ENCODE measurements at regions of chr12 and their contacts with region 1.

Region 1: DNA sequence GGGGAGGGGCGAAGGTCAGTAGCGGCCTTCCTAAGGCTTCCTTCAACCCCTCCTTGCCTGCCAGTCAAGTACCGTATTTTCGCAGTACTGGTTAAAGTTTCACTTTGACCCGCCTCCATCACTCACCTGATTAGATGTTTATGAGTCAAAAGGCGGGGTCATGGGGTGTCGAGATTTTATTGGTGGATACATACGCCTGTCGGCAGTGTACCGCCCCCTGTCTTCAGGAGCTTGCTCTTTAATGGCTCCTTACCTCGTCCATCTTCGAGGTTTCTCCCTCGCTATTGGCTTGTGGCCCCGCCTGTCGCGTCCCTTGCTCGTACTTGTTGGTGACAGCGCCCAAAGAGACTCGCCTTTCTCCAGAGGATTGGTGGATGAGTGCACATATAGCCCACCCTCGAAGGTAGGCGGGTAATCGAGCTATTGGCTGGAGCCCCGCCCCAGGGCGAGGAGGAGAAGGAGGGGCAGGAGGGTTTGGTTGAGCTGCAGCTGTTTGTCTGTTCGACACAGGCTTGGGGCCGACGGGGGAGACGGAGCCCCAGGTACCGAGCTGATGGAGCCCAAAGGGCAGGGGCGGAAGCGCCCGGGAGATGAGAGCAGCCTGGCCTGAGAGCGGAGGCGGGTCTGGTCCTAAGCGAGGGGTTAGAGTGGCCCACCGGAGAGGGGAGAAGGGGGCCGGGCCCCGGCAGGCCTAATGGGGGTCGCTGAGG is at the start of gene RAB5B:
- DNase-seq: peak; percentile 99
- ATAC-seq: peak; percentile 91
- H3K4me3 Mint-ChIP-seq: no peak within 1 kb of the TSS
- H3K27ac Mint-ChIP-seq: no peak within 1 kb of the TSS
- H3K4me1 Mint-ChIP-seq: no peaks in the 10 kb centered on the region; the same call in 1 of the 2 replicates
- H3K27me3 Mint-ChIP-seq: no peaks in the 10 kb centered on the region
- CTCF ChIP-seq: no peak
- total RNA-seq, gene RAB5B: 55.0 to 65.8 TPM (median 64.3 TPM) in 3 replicates

Region 2: GRCh38 chr12:55829967-55830600 is 143.7 kb before region 1 on chr12:
- CTCF ChIA-PET with region 1: interaction called, 6 read pairs
- POLR2A ChIA-PET with region 1: interaction called, 11 read pairs
- DNase-seq: peak; percentile 47
- ATAC-seq: peak; percentile 1
- H3K4me3 Mint-ChIP-seq: peak overlapping the region; percentile 97
- H3K27ac Mint-ChIP-seq: peak overlapping the region; percentile 99
- H3K4me1 Mint-ChIP-seq: peaks cover 35% of the 10 kb centered on the region
- H3K27me3 Mint-ChIP-seq: no peaks in the 10 kb centered on the region
- CTCF ChIP-seq: no peak

Region 3: DNA sequence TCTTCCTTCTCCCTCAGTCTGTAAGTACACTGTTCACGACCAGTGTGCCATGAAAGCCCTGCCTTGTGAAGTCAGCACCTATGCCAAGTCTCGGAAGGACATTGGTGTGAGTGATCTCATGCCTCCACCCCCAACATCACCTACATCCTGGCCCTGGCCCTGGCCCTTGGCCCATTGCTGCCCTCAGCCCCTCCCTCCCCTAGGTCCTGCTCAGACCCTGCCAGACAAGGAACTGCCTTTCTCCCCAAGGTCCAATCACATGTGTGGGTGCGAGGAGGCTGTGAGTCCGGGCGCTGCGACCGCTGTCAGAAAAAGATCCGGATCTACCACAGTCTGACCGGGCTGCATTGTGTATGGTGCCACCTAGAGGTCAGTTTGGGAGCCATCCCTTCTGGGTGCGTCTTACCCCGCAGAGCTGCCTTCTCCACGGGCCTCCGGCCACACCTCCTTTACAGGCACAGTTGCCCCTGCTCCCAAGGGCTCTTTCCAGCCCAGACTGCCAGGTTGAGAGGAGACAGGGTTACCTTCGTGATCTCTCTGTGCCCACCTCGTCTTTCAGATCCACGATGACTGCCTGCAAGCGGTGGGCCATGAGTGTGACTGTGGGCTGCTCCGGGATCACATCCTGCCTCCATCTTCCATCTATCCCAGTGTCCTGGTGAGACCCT is 33.6 kb before region 1 on chr12:
- CTCF ChIA-PET with region 1: interaction called, 12 read pairs
- POLR2A ChIA-PET with region 1: interaction called, 4 read pairs
- DNase-seq: peak; percentile 92
- ATAC-seq: peak; percentile 94
- H3K4me3 Mint-ChIP-seq: peak overlapping the region; percentile 10; the same call in 1 of the 2 replicates
- H3K27ac Mint-ChIP-seq: no peak overlapping the region
- H3K4me1 Mint-ChIP-seq: peaks cover 9% of the 10 kb centered on the region
- H3K27me3 Mint-ChIP-seq: peaks cover 17% of the 10 kb centered on the region
- CTCF ChIP-seq: peak; percentile 74

Region 4: DNA sequence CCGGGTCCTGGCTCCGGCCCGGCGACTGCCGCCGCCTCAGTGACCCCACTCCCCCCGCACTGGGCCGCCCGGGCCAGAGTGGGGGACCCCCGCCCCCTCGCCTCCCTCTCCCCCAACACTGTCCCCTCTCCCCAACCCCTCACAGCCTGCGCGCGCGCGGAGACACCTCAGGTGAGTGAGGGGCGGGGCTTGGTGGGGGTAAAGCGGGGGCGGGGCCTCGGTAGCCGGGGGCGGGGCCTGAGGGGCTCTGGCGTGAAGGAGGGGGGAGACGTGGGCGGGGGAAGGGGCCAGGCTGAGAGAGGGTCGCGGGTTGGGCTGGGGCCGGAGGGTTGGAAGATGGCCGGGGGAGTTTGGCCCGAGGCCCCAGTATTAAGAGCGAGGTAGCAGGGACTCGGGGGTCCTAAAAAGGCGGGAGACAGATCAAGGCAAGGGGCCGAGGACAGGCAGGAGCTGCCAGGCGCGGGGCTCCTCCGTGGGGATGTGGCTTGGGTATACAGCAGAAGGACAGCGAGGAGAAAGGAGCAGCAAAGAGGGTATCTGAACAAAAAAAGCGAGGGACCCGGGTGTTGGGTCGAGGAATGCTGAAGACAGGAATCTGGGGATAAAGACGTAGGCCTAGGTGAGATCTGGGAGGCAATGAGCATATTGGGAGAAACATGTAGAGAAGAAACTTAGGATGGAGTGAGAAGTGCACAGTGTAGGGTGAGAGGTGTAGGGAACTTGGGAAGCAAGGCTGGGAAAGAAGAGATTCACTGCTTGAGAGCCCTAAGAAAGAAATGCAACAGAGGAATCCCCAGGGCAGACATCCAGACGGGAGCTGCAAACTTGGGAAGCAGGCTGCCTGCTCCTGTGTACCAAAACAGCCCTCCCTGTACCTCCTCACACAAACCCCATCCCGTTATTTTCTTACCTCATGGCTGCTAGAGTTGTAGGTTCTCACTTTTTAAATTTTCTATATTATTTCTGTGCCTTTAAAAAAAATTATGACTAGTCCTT is 34.1 kb after region 1 on chr12:
- CTCF ChIA-PET with region 1: no interaction called
- POLR2A ChIA-PET with region 1: interaction called, 22 read pairs
- DNase-seq: peak; percentile 86
- ATAC-seq: peak; percentile 91
- H3K4me3 Mint-ChIP-seq: peak overlapping the region; percentile 84
- H3K27ac Mint-ChIP-seq: peak overlapping the region; percentile 82
- H3K4me1 Mint-ChIP-seq: peaks cover 19% of the 10 kb centered on the region
- H3K27me3 Mint-ChIP-seq: no peaks in the 10 kb centered on the region; the same call in 1 of the 2 replicates
- CTCF ChIP-seq: no peak

Region 5: DNA sequence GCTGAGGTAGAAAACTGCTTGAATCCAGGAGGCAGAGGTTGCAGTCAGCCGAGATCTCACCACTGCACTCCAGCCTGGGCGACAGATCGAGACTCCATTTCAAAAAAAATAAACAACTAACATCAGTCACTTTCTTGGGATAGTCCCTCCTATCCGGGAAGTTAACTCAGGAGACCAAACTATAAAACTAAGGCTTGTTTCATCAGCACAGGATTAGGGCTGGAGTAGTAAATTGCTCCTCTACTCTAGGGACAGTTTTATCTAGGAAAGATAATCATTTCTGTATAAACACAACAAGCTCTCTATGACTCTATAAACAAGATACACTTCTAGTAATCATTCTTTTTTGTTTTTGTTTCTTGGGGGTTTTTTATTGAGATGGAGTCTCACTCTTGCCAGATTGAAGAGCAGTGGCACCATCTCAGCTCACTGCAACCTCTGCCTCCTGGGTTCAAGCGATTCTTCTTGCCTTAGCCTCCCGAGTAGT is 79.7 kb after region 1 on chr12:
- CTCF ChIA-PET with region 1: no interaction called
- POLR2A ChIA-PET with region 1: no interaction called
- DNase-seq: no peak
- ATAC-seq: no peak
- H3K4me3 Mint-ChIP-seq: no peak overlapping the region
- H3K27ac Mint-ChIP-seq: no peak overlapping the region
- H3K4me1 Mint-ChIP-seq: no peaks in the 10 kb centered on the region
- H3K27me3 Mint-ChIP-seq: no peaks in the 10 kb centered on the region
- CTCF ChIP-seq: no peak

Region 6: GRCh38 chr12:56078990-56079664 is 105.4 kb after region 1 on chr12:
- CTCF ChIA-PET with region 1: interaction called, 10 read pairs
- POLR2A ChIA-PET with region 1: interaction called, 5 read pairs
- DNase-seq: peak; percentile 96
- ATAC-seq: peak; percentile 68
- H3K4me3 Mint-ChIP-seq: peak overlapping the region; percentile 89
- H3K27ac Mint-ChIP-seq: peak overlapping the region; percentile 98
- H3K4me1 Mint-ChIP-seq: peaks cover 23% of the 10 kb centered on the region
- H3K27me3 Mint-ChIP-seq: no peaks in the 10 kb centered on the region
- CTCF ChIP-seq: peak; percentile 46; the same call in 1 of the 2 replicates